PC-3 (cell line): ENCODE measurements at regions of chr4 and their contacts with region 1.

Region 1: DNA sequence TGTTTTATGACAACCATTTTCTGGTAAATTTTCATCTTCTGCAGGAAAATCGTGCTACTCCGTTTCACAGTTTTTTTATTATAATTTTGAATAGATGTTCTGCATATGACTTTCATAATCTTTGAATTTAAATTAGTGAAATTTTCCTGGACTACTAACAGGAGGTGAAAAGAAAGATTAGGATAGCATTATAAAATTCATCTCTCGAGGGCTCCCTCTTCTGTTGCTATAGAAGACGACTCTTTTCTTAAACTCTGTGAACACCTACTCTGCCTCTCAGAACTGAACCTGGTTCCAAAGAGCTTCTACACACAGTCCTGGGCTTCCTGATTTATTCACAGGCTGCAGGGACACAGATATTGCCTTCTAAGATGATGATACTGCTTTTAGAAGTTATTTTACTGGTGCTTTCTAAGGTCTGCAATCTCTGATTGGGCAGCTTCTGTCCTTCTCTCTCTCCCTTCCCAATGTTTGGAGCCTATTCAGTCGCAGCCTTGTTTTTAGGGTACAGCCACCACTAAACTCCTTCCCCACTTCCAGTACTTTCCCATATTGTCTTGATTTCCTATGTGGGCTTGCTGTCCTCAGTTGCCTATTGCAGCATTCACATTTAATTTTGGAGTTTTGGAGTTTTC is 10.1 kb upstream of the SAP30 start:
- DNase-seq: peak; percentile 33
- ATAC-seq: peak; percentile 65
- H3K4me3 ChIP-seq: no peak overlapping the region
- H3K27ac ChIP-seq: no peak overlapping the region
- H3K4me1 ChIP-seq: no peaks in the 10 kb centered on the region
- H3K27me3 ChIP-seq: no peaks in the 10 kb centered on the region
- CTCF ChIP-seq: peak; percentile 53; the same call in 1 of the 2 replicates

Region 2: DNA sequence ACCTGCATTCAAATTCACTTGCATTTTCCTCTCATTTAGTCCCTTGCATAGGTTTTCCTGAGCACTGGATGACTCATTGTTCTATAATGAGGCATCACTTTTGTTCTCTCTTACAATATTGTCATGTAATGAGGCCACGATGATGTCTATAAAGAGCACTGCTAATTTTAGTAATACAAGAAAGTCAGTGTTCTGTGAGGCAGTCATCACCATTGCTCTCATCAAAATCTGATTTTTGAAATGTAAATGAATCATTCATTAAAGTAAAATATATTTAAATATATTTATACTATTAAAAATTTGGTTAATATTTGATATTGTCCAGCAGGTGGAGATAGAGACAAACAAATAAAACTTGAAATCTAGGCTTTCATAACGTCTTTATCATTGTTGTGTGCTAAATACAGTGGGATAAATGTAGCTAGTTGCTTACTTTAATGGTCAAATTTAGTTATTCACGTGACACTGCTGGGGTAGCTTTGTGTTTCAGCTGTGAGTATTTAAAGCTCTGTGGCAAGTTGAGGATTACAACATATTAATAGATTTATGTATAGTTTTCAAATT is 42.0 kb before region 1 on chr4:
- CTCF ChIA-PET with region 1: no interaction called
- POLR2A ChIA-PET with region 1: no interaction called
- intact Hi-C with region 1: loop called (anchors 1 kb)
- DNase-seq: peak; percentile 56
- ATAC-seq: peak; percentile 67
- H3K4me3 ChIP-seq: no peak overlapping the region
- H3K27ac ChIP-seq: no peak overlapping the region
- H3K4me1 ChIP-seq: peaks cover 9% of the 10 kb centered on the region
- H3K27me3 ChIP-seq: no peaks in the 10 kb centered on the region
- CTCF ChIP-seq: 0 out of 2 replicates have a peak, but pooled peaks have one; percentile 18

Region 3: DNA sequence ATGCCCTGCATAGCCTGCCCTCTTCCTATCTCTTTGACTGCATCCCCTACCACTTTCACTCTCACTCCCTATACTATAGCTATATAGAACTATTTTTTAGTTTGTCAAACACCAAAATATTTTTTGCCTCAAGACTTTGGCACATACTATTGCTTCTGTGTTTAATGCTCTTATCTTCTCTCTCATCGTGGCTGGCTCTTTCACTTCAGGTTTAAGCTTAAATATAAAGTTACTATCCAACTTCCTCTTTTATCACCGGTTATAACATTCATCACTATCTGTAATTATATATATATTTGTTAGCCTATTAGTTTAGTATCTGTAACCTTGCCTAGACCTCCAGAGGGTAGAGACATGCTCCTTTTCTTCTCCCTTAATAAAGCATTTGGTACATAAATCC is 15.1 kb before region 1 on chr4:
- CTCF ChIA-PET with region 1: no interaction called
- POLR2A ChIA-PET with region 1: interaction called, 11 read pairs
- intact Hi-C with region 1: no loop called
- DNase-seq: no peak
- ATAC-seq: peak; percentile 39
- H3K4me3 ChIP-seq: peak overlapping the region; percentile 31; the same call in 1 of the 2 replicates
- H3K27ac ChIP-seq: 0 out of 2 replicates have a peak overlapping the region, but pooled peaks have one; percentile 9
- H3K4me1 ChIP-seq: peaks cover 21% of the 10 kb centered on the region
- H3K27me3 ChIP-seq: no peaks in the 10 kb centered on the region
- CTCF ChIP-seq: no peak